ENCODE measurements at regions of chr12 and their contacts with region 1.

Region 1: DNA sequence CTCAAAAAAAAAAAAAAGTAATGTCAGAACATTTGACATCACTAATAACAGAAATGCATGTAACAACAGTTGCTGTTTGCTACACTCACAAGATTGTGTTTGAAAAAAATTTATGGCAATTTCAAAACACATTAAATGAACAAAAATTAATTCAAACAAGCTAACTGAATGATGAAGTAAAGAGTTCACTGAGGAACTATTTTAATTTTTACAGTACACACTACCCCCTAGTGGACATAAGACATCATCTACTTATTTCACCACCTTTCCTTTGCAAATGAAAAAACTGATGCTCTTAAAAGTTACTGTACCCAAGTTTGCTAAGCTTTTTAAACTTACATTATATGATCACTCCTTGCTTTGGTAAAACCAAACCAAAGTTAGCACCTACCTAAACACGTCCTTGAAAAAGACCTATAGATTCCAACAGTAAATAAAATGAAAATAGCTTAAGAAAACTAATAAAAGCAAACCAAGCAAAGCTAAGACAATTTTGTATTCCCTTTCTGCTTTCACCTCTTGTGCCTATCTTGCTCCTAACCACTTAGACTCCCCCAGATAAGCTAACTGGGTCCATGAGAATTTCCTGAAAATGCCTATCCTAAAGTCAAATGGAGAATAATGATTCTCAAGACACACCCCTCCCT is 22.2 kb downstream of the UBE2N start:
- DNase-seq: peak; percentile 68
- ATAC-seq: peak; percentile 74
- H3K4me3 ChIP-seq: no peak overlapping the region
- H3K27ac ChIP-seq: no peak overlapping the region
- H3K4me1 ChIP-seq: no peaks in the 10 kb centered on the region
- H3K27me3 ChIP-seq: no peaks in the 10 kb centered on the region
- CTCF ChIP-seq: peak; percentile 69

Region 2: GRCh38 chr12:92987362-92987761 is 432.1 kb before region 1 on chr12:
- CTCF ChIA-PET with region 1: interaction called, 8 read pairs
- POLR2A ChIA-PET with region 1: no interaction called
- intact Hi-C with region 1: loop called (anchors 1 kb)
- DNase-seq: peak; percentile 87
- ATAC-seq: peak; percentile 77
- H3K4me3 ChIP-seq: no peak overlapping the region
- H3K27ac ChIP-seq: no peak overlapping the region
- H3K4me1 ChIP-seq: peaks cover 7% of the 10 kb centered on the region
- H3K27me3 ChIP-seq: no peaks in the 10 kb centered on the region
- CTCF ChIP-seq: peak; percentile 79

Region 3: DNA sequence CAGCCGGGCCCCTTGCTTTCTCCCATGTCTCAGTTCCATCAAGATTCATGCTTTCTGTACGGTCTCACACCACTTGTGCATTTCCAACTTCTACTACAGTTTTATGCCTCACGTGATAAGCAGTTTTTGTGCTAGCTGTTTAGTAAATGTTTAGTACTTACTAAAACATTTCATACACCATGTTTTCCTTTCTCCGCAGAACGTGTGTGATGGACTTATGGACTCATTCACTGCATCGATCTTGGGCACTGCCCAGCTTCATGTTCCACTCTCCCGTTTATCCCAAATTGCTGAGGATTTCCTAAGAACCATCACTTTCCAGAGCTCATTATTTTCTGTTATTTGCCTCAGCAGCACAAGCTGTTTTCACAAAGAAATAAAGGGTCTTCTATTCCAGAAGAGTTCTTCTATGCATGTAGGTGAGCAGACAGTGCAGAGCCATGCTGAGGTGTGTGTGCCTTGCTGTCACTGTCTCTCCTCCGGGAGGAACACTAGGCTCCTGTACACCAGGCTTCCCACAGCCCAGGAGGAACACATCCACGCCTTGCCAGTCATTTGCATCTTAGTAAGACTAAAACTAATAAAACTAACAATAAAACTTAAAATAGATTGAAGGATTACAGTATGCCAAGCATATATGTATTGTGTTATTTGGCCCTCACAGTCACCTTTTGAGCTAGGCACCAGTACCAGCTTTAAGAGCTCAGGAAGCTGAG is 400.1 kb before region 1 on chr12:
- CTCF ChIA-PET with region 1: interaction called, 5 read pairs
- POLR2A ChIA-PET with region 1: interaction called, 13 read pairs
- intact Hi-C with region 1: no loop called
- DNase-seq: no peak
- ATAC-seq: peak; percentile 56
- H3K4me3 ChIP-seq: no peak overlapping the region
- H3K27ac ChIP-seq: no peak overlapping the region
- H3K4me1 ChIP-seq: peaks cover 22% of the 10 kb centered on the region
- H3K27me3 ChIP-seq: no peaks in the 10 kb centered on the region
- CTCF ChIP-seq: no peak

Region 4: DNA sequence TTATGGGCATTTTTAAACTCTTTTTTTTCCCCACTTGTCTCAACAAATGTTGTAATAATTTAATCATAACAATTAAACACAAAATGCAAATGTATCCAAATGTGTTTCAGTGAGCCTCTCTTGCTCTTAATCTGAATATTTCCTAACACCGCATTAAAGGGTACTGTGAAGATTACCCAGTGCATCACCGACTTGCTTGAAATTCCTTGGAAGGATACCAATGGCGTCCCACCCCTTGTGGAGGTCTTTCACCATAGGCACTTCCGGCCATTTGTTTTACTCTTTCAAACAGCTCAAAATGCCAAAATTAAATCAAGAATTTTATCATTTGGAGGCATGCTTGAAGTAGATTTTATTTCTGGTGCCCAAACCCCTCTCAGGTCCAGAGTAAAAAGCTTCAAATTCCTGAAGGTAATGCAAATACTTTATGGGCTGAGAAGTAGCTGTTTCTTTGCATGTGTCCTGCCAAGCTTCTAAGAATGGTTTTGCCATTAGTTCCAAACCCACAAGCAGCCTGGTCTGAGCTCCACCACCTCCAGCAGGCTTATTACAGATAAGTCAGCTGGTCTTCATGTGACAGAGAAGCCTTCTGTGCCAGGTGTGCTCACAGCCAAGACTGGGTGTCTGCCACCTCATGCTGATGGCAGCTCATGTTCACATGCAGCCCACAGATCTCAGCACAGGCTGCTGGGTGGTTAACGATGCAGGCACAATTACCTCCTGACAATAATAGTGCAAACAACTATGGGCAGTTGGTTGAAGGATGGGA is 58.2 kb before region 1 on chr12:
- CTCF ChIA-PET with region 1: interaction called, 10 read pairs
- POLR2A ChIA-PET with region 1: no interaction called
- intact Hi-C with region 1: no loop called
- DNase-seq: no peak
- ATAC-seq: no peak
- H3K4me3 ChIP-seq: no peak overlapping the region
- H3K27ac ChIP-seq: no peak overlapping the region
- H3K4me1 ChIP-seq: no peaks in the 10 kb centered on the region
- H3K27me3 ChIP-seq: no peaks in the 10 kb centered on the region
- CTCF ChIP-seq: no peak

Measured in PC-3 (cell line).